Naive thymus-derived CD4-positive, alpha-beta T cell (primary cell): ENCODE measurements at regions of chr17 and their contacts with region 1.

Region 1: DNA sequence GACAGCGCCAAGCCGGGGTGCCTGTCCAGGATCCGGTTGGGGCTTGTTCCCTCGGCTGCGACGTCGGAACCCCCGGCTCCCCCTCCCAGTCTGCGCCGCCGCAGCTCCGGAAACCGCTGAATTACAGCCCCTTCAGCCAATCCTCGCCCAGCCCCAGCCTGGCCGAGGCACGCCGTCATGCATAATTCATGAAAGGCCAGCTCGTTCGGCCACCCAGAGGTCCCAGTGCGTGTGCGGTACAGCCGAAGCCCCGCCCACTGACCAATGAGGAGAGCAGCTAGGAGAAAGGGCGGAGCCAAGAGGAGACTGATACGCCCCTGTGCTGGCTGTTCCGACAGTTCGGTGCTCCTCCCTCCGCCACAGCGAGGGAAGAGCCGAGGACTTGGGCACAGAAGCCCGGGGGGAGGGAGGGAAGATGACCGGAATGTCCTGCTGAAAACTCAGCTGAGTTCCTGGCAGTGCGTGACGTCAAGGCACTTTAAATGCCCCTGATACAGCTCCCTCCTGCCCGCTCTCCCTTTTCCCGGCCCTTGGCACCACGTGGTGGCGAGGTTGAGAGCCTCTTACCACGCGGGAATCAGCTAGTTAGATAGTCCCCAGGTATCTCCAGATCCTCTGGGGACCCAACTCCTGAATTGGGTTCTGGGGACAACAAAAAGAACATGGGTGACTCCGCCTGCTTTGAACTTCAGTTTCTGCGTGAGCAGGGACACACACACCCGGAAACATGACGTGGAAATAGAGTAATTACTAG is at the start of gene STAT3:
- DNase-seq: peak; percentile 100
- ATAC-seq: peak; percentile 93
- H3K4me3 ChIP-seq: peak within 1 kb of the TSS; percentile 65
- H3K4me3 Mint-ChIP-seq: peak within 1 kb of the TSS; percentile 87 to 99 (median 96)
- H3K27ac ChIP-seq: peak within 1 kb of the TSS; percentile 94
- H3K27ac Mint-ChIP-seq: peak within 1 kb of the TSS; percentile 99 to 100 (median 100)
- H3K4me1 ChIP-seq: peaks cover 13 to 20% of the 10 kb centered on the region in 2 donors
- H3K4me1 Mint-ChIP-seq: peaks cover 35 to 59% (median 48%) of the 10 kb centered on the region in 7 donors
- H3K27me3 ChIP-seq: no peaks in the 10 kb centered on the region
- H3K27me3 Mint-ChIP-seq: peaks cover 0 to 3% (median 0%) of the 10 kb centered on the region in 5 donors
- total RNA-seq, gene STAT3: 133 to 275 (median 231) TPM

Region 2: GRCh38 chr17:41750862-41751261 is 637.7 kb before region 1 on chr17:
- CTCF ChIA-PET with region 1: no interaction called
- POLR2A ChIA-PET with region 1: no interaction called
- intact Hi-C with region 1: no loop called
- DNase-seq: no peak
- ATAC-seq: no peak
- H3K4me3 ChIP-seq: no peak overlapping the region
- H3K4me3 Mint-ChIP-seq: no peak overlapping the region
- H3K27ac ChIP-seq: no peak overlapping the region
- H3K27ac Mint-ChIP-seq: peak overlapping the region in 1 of 9 donors; percentile 65
- H3K4me1 ChIP-seq: no peaks in the 10 kb centered on the region
- H3K4me1 Mint-ChIP-seq: no peaks in the 10 kb centered on the region
- H3K27me3 ChIP-seq: no peaks in the 10 kb centered on the region
- H3K27me3 Mint-ChIP-seq: peaks cover 0 to 8% (median 0%) of the 10 kb centered on the region in 5 donors

Region 3: GRCh38 chr17:42183741-42184711 is 204.5 kb before region 1 on chr17:
- CTCF ChIA-PET with region 1: no interaction called
- POLR2A ChIA-PET with region 1: no interaction called
- intact Hi-C with region 1: loop called in 1 of 2 experiments (anchors 5 kb)
- DNase-seq: peak; percentile 54 to 92 (median 72)
- ATAC-seq: peak; percentile 78
- H3K4me3 ChIP-seq: peak overlapping the region; percentile 98
- H3K4me3 Mint-ChIP-seq: peak overlapping the region; percentile 85 to 95 (median 90)
- H3K27ac ChIP-seq: peak overlapping the region; percentile 81
- H3K27ac Mint-ChIP-seq: peak overlapping the region; percentile 69 to 94 (median 88)
- H3K4me1 ChIP-seq: peaks cover 15 to 38% of the 10 kb centered on the region in 2 donors
- H3K4me1 Mint-ChIP-seq: peaks cover 21 to 52% (median 41%) of the 10 kb centered on the region in 7 donors
- H3K27me3 ChIP-seq: no peaks in the 10 kb centered on the region
- H3K27me3 Mint-ChIP-seq: peaks cover 0 to 25% (median 8%) of the 10 kb centered on the region in 5 donors

Region 4: DNA sequence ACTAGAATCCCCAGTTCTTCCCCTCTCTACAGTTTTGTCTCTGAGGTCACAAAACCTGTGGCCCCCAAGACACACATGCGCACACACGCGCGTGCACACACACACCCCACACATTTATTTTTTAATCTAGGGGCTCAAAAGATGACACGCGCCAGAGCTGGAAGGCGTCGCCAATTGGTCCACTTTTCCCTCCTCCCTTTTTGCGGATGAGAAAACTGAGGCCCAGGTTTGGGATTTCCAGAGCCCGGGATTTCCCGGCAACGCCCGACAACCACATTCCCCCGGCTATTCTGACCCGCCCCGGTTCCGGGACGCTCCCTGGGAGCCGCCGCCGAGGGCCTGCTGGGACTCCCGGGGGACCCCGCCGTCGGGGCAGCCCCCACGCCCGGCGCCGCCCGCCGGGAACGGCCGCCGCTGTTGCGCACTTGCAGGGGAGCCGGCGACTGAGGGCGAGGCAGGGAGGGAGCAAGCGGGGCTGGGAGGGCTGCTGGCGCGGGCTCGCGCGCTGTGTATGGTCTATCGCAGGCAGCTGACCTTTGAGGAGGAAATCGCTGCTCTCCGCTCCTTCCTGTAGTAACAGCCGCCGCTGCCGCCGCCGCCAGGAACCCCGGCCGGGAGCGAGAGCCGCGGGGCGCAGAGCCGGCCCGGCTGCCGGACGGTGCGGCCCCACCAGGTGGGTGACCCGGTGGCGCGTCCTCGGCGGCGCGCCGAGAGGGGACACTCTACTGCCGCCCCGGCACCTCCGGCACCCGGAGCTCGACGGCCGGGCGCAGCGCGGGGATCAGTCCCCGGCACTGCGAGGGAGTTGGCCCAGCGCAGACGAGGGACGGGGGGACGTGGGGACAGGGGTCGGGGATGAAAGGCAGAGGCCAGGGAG is 100.4 kb before region 1 on chr17 and contains the start of gene STAT5A:
- CTCF ChIA-PET with region 1: no interaction called
- POLR2A ChIA-PET with region 1: interaction called, 13 read pairs
- intact Hi-C with region 1: loop called in 1 of 2 experiments (anchors 1 kb)
- DNase-seq: peak; percentile 58 to 83 (median 79)
- ATAC-seq: peak; percentile 90
- H3K4me3 ChIP-seq: peak within 1 kb of the TSS; percentile 88
- H3K4me3 Mint-ChIP-seq: peak within 1 kb of the TSS; percentile 87 to 97 (median 93)
- H3K27ac ChIP-seq: peak within 1 kb of the TSS; percentile 93
- H3K27ac Mint-ChIP-seq: peak within 1 kb of the TSS; percentile 93 to 99 (median 96)
- H3K4me1 ChIP-seq: peaks cover 18 to 24% of the 10 kb centered on the region in 2 donors
- H3K4me1 Mint-ChIP-seq: peaks cover 27 to 65% (median 54%) of the 10 kb centered on the region in 7 donors
- H3K27me3 ChIP-seq: no peaks in the 10 kb centered on the region
- H3K27me3 Mint-ChIP-seq: no peaks in the 10 kb centered on the region
- total RNA-seq, gene STAT5A: 111 to 162 (median 150) TPM

Region 5: DNA sequence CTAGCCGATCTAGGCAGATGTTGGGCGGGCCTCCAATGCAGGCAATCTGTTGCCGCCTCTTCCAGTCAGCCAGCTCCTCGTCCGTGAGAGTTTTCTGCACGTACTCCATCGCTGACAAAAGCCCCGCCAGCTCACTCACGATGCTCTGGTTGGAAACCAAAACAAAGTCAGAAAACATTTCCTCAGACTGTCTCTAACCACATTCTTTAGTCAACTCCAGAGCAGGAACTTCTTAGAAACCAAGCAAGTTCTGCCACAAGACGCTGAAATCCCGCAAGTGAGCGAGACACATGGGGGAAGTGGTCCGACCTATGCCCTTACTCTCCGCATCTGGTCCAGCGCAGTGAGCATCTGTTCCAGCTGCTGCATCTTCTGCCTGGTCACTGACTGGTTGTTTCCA is 51.1 kb before region 1 on chr17:
- CTCF ChIA-PET with region 1: no interaction called
- POLR2A ChIA-PET with region 1: interaction called, 16 read pairs
- intact Hi-C with region 1: loop called (anchors 1 kb)
- DNase-seq: peak; percentile 23 to 87 (median 80)
- ATAC-seq: peak; percentile 92
- H3K4me3 ChIP-seq: no peak overlapping the region
- H3K4me3 Mint-ChIP-seq: peak overlapping the region; percentile 52 to 84 (median 72)
- H3K27ac ChIP-seq: peak overlapping the region; percentile 77
- H3K27ac Mint-ChIP-seq: peak overlapping the region; percentile 85 to 98 (median 93)
- H3K4me1 ChIP-seq: peaks cover 11 to 29% of the 10 kb centered on the region in 2 donors
- H3K4me1 Mint-ChIP-seq: peaks cover 18 to 73% (median 38%) of the 10 kb centered on the region in 7 donors
- H3K27me3 ChIP-seq: no peaks in the 10 kb centered on the region
- H3K27me3 Mint-ChIP-seq: no peaks in the 10 kb centered on the region

Region 6: GRCh38 chr17:42405963-42406495 is 17.5 kb after region 1 on chr17:
- CTCF ChIA-PET with region 1: interaction called, 11 read pairs
- POLR2A ChIA-PET with region 1: interaction called, 51 read pairs
- intact Hi-C with region 1: loop called (anchors 1 to 2 kb)
- DNase-seq: peak; percentile 72 to 86 (median 80)
- ATAC-seq: peak; percentile 91
- H3K4me3 ChIP-seq: no peak overlapping the region
- H3K4me3 Mint-ChIP-seq: peak overlapping the region in 4 of 10 donors; percentile 9 to 41 (median 29)
- H3K27ac ChIP-seq: no peak overlapping the region
- H3K27ac Mint-ChIP-seq: peak overlapping the region in 6 of 9 donors; percentile 51 to 71 (median 62)
- H3K4me1 ChIP-seq: peaks cover 4 to 8% of the 10 kb centered on the region in 2 donors
- H3K4me1 Mint-ChIP-seq: peaks cover 6 to 28% (median 17%) of the 10 kb centered on the region in 7 donors
- H3K27me3 ChIP-seq: no peaks in the 10 kb centered on the region
- H3K27me3 Mint-ChIP-seq: peaks cover 0 to 3% (median 0%) of the 10 kb centered on the region in 5 donors

Region 7: GRCh38 chr17:42677008-42677857 is 288.7 kb after region 1 on chr17:
- CTCF ChIA-PET with region 1: no interaction called
- POLR2A ChIA-PET with region 1: interaction called, 3 read pairs
- intact Hi-C with region 1: loop called in 1 of 2 experiments (anchors 2 kb)
- DNase-seq: peak; percentile 80 to 98 (median 92)
- ATAC-seq: peak; percentile 90
- H3K4me3 ChIP-seq: peak overlapping the region; percentile 73
- H3K4me3 Mint-ChIP-seq: peak overlapping the region; percentile 79 to 94 (median 90)
- H3K27ac ChIP-seq: peak overlapping the region; percentile 64
- H3K27ac Mint-ChIP-seq: peak overlapping the region in 8 of 9 donors; percentile 7 to 91 (median 82)
- H3K4me1 ChIP-seq: peaks cover 47 to 57% of the 10 kb centered on the region in 2 donors
- H3K4me1 Mint-ChIP-seq: peaks cover 21 to 60% (median 50%) of the 10 kb centered on the region in 7 donors
- H3K27me3 ChIP-seq: peaks cover 5 to 21% of the 10 kb centered on the region in 2 donors
- H3K27me3 Mint-ChIP-seq: peaks cover 26 to 49% (median 36%) of the 10 kb centered on the region in 5 donors